Activated B cell treated with CpG ODN at 0.5 μM for 24 hours (primary cell): ENCODE measurements at regions of chr12 and their contacts with region 1.

Region 1: GRCh38 chr12:10033783-10034545 is 3.5 kb downstream of the CLEC9A start:
- DNase-seq: no peak
- ATAC-seq: no peak
- H3K4me3 Mint-ChIP-seq: no peak overlapping the region
- H3K27ac Mint-ChIP-seq: no peak overlapping the region
- H3K4me1 Mint-ChIP-seq: no peaks in the 10 kb centered on the region
- H3K27me3 Mint-ChIP-seq: peaks cover 4% of the 10 kb centered on the region
- CTCF ChIP-seq: no peak

Region 2: GRCh38 chr12:9864913-9865675 is 168.9 kb before region 1 on chr12:
- CTCF ChIA-PET with region 1: no interaction called
- POLR2A ChIA-PET with region 1: no interaction called
- intact Hi-C with region 1: no loop called
- DNase-seq: no peak
- ATAC-seq: peak; percentile 13
- H3K4me3 Mint-ChIP-seq: peak overlapping the region; percentile 74
- H3K27ac Mint-ChIP-seq: peak overlapping the region; percentile 68
- H3K4me1 Mint-ChIP-seq: peaks cover 41% of the 10 kb centered on the region
- H3K27me3 Mint-ChIP-seq: no peaks in the 10 kb centered on the region
- CTCF ChIP-seq: no peak

Region 3: GRCh38 chr12:10012630-10013330 is 21.2 kb before region 1 on chr12:
- CTCF ChIA-PET with region 1: no interaction called
- POLR2A ChIA-PET with region 1: interaction called, 14 read pairs
- intact Hi-C with region 1: no loop called
- DNase-seq: no peak
- ATAC-seq: no peak
- H3K4me3 Mint-ChIP-seq: no peak overlapping the region
- H3K27ac Mint-ChIP-seq: no peak overlapping the region
- H3K4me1 Mint-ChIP-seq: no peaks in the 10 kb centered on the region
- H3K27me3 Mint-ChIP-seq: peaks cover 34% of the 10 kb centered on the region
- CTCF ChIP-seq: no peak